ENCODE measurements at regions of chr1 and their contacts with region 1.

Region 1: DNA sequence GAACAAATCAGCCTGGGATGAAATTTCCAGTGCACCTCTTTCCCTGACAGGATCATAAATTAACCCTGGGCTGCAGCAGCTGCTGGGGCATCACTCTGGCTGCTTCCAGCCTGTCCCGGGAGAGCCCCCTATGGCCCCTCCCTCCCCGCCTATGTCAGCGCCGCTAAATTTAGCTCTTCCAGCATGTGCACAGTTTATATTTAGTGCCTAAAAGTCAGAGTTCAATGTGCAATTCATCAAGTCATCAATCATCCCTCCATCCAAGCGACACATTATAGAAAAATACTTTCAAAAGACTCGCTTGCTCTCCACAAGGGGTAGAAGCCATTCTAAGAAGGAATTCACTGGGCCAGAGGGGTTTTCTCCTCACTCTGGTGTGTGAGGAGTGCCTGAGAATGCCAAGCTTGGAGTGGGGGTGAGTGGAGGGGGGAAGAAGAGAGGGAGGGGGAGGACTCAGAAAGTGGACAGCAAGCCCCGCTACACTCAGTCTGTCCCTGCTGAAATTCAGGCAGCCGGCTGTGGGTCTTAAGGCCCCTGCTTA is 37.4 kb downstream of the XCL1 start:
- DNase-seq: no peak
- H3K4me3 ChIP-seq: no peak overlapping the region
- H3K27ac ChIP-seq: no peak overlapping the region
- H3K4me1 ChIP-seq: peaks cover 26% of the 10 kb centered on the region
- H3K27me3 ChIP-seq: no peaks in the 10 kb centered on the region
- CTCF ChIP-seq: no peak
- POLR2A ChIP-seq: no peak

Region 2: DNA sequence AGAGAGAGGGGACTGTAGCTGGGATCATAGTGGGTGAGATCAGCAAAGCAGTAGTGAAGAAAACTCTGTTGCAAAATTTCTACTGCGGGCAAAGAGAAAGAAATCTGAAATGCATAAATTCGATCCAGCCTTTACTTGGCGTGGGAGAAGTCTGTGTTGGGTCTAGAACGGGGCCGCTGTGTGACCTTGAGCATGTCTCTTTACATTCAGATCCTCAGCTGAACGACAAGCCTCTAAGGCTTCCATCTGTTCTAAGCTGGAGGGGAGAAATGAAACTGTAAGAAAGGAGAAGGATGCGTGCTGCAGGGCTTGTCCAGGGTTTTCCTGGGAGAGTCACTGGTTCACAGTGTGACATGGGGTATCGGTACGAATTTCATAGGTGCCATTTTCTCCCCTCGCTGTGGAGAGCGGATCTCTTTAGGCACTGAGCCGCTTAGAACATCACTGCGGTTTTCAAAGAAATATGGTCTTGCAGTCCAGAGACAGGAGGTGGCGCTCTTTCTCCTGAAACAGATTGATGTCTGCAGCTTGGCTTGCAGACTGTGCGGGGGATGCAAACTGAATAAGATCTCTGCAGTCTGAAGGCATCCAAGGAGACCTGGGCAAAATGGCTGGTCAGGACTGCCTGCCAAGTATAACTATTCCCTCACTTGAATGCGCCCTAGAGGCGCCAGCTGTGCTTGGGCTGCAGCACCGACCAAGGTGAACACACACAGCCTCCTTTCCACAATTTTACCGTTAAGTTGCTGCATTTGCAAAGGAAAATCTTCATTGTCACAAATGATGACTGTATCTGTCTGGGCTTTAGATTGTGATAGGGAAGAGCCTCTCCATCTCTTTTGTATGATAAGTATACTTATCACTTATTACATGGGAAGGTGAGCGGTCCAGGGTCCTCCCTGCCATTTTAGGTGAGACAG is 174.0 kb before region 1 on chr1:
- intact Hi-C with region 1: no loop called
- DNase-seq: peak; percentile 94
- H3K4me3 ChIP-seq: peak overlapping the region in 1 of 2 donors; percentile 34
- H3K27ac ChIP-seq: peak overlapping the region in 1 of 2 donors; percentile 21
- H3K4me1 ChIP-seq: peaks cover 5% of the 10 kb centered on the region
- H3K27me3 ChIP-seq: no peaks in the 10 kb centered on the region
- CTCF ChIP-seq: peak; percentile 75 to 89 (median 78)
- POLR2A ChIP-seq: no peak

Region 3: DNA sequence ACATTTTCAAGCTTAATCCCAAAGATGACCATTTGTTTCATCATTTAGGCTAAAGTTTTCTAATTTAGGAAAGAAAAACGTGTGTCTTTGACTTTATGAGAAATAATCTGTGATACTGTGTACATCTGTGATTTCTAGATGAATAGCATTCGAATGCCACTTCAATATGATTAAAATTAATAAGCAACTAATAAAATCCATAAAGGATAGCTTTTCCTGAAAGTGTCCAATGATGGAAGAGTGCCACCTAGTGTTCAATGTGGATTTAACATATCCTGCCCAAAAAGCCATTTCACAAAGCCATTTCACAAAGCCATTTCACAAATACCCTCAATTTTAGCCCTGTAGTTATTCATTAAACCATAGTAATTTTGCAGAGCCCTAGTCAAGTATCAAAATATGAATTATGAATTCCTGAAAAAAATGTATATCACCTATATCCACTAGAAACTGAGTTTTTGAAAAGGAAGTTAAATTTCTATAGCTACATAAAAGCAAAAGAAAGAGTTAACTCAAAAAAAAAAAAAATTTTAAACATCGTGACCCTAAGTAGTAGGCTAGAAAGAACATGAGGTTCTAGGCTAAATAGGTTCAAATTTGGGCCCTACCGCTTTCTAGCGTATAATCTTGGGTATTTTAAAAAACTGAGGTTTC is 734.7 kb after region 1 on chr1:
- intact Hi-C with region 1: loop called (anchors 5 kb)
- DNase-seq: no peak
- H3K4me3 ChIP-seq: no peak overlapping the region
- H3K27ac ChIP-seq: no peak overlapping the region
- H3K4me1 ChIP-seq: no peaks in the 10 kb centered on the region
- H3K27me3 ChIP-seq: no peaks in the 10 kb centered on the region
- CTCF ChIP-seq: peak; percentile 63 to 80 (median 71)
- POLR2A ChIP-seq: no peak

Measured in testis (tissue), 5 donors.